ENCODE measurements at regions of chr1 and their contacts with region 1.

Region 1: DNA sequence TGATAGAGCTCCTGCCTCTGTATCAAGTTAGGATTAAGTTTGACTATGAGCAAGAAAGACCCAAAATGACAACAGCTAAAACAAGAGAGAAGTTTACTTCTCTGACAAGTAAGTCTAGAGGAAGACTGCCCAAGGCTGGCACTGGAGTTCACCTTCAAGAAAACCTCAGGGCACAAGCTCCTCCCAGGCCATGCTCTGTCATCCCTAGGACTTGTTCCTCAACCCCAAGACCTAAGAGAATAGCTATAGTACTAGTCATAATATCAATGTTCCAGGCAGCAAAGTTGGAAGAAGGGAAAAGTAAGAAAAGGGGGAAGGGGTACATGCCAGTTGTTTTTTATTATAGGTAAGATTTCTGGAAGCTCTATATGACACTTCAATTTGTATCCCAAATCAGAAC is 26.4 kb upstream of the DARS2 start:
- DNase-seq: peak; percentile 58
- ATAC-seq: peak; percentile 53
- H3K4me3 ChIP-seq: no peak overlapping the region
- H3K27ac ChIP-seq: no peak overlapping the region
- H3K4me1 ChIP-seq: peaks cover 9% of the 10 kb centered on the region; the same call in 1 of the 2 replicates
- H3K27me3 ChIP-seq: no peaks in the 10 kb centered on the region
- CTCF ChIP-seq: no peak

Region 2: GRCh38 chr1:173749137-173749536 is 48.9 kb before region 1 on chr1:
- CTCF ChIA-PET with region 1: no interaction called
- POLR2A ChIA-PET with region 1: interaction called, 19 read pairs
- intact Hi-C with region 1: no loop called
- DNase-seq: peak; percentile 55
- ATAC-seq: peak; percentile 73
- H3K4me3 ChIP-seq: no peak overlapping the region
- H3K27ac ChIP-seq: no peak overlapping the region
- H3K4me1 ChIP-seq: peaks cover 8% of the 10 kb centered on the region
- H3K27me3 ChIP-seq: no peaks in the 10 kb centered on the region
- CTCF ChIP-seq: no peak

Measured in PC-3 (cell line).